ENCODE measurements at regions of chr7 and their contacts with region 1.

Region 1: DNA sequence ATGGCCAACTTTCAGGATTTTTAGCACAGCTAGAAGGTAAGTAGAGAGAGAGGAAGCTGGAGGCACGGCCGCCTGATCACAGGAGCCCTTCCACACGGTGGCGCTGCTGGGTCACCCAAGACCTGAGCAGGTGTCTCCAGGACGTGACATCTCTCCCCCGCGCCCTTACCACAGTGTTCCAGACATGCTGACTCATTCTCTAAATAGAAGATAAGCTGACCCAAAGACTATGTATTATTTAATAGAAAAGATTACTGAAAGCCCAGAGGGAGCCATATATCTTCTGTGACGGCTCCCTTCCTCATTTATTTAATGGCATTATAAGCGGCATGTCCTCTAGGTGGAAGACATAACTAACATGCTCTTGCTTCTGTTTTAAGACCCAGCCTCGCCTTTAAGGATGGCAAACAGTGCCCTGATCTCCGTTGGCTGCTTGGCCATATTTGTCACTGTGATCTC is 26.0 kb upstream of the MALSU1 start:
- DNase-seq: peak; percentile 64 to 90 (median 86)
- ATAC-seq: peak; percentile 59 to 92 (median 88)
- H3K4me3 ChIP-seq: no peak overlapping the region
- H3K27ac ChIP-seq: peak overlapping the region in 2 of 12 donors; percentile 19 to 22
- H3K4me1 ChIP-seq: peaks cover 0 to 9% (median 0%) of the 10 kb centered on the region in 12 donors
- H3K27me3 ChIP-seq: no peaks in the 10 kb centered on the region
- CTCF ChIP-seq: peak; percentile 55 to 76 (median 70)
- POLR2A ChIP-seq: no peak

Region 2: DNA sequence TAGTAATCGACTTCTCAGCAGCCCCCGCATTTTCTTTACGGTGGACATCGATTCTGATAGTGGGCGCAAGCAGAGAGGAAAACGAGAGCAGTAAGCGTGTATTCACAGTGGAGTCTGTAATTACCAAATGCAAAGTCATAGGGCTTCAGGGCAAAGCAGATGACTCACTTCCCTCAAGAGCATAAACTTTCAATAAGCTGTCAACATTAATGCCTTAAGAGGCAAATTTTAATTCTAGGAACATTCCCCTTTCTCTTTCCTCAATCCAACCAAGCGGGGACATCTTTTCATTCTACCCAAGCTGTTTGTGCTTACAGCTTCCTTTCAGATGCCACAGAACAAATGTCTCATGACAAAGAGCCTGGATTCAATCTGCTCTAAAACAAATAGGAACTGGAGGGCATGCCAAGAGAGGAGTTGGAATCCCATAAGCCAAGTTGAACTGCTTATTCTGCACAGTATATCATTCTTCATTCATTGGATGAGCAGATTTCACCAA is 74.6 kb after region 1 on chr7:
- intact Hi-C with region 1: loop called in 1 of 10 experiments (anchors 5 kb)
- DNase-seq: no peak
- ATAC-seq: no peak
- H3K4me3 ChIP-seq: peak overlapping the region in 1 of 12 donors; percentile 59
- H3K27ac ChIP-seq: peak overlapping the region in 1 of 12 donors; percentile 52
- H3K4me1 ChIP-seq: peaks cover 0 to 7% (median 0%) of the 10 kb centered on the region in 12 donors
- H3K27me3 ChIP-seq: peaks cover 0 to 4% (median 0%) of the 10 kb centered on the region in 9 donors
- CTCF ChIP-seq: no peak
- POLR2A ChIP-seq: no peak

Region 3: GRCh38 chr7:23462846-23463245 is 189.7 kb after region 1 on chr7:
- intact Hi-C with region 1: loop called (anchors 2 to 5 kb)
- DNase-seq: no peak
- ATAC-seq: peak in 3 of 4 donors; percentile 78 to 81 (median 80)
- H3K4me3 ChIP-seq: no peak overlapping the region
- H3K27ac ChIP-seq: no peak overlapping the region
- H3K4me1 ChIP-seq: peaks cover 0 to 10% (median 5%) of the 10 kb centered on the region in 12 donors
- H3K27me3 ChIP-seq: peaks cover 18 to 97% (median 56%) of the 10 kb centered on the region in 9 donors
- CTCF ChIP-seq: peak in 7 of 12 donors; percentile 24 to 49 (median 34)
- POLR2A ChIP-seq: no peak

Region 4: GRCh38 chr7:23546897-23547572 is 273.9 kb after region 1 on chr7:
- intact Hi-C with region 1: loop called in 3 of 10 experiments (anchors 10 kb)
- DNase-seq: peak in 4 of 5 donors; percentile 45 to 65 (median 60)
- ATAC-seq: peak in 3 of 4 donors; percentile 79 to 86 (median 83)
- H3K4me3 ChIP-seq: no peak overlapping the region
- H3K27ac ChIP-seq: no peak overlapping the region
- H3K4me1 ChIP-seq: no peaks in the 10 kb centered on the region
- H3K27me3 ChIP-seq: no peaks in the 10 kb centered on the region
- CTCF ChIP-seq: peak; percentile 89 to 97 (median 94)
- POLR2A ChIP-seq: no peak

Region 5: GRCh38 chr7:23712368-23713284 is 439.5 kb after region 1 on chr7:
- intact Hi-C with region 1: loop called in 2 of 10 experiments (anchors 10 kb)
- DNase-seq: no peak
- ATAC-seq: peak in 2 of 4 donors; percentile 55 to 68
- H3K4me3 ChIP-seq: no peak overlapping the region
- H3K27ac ChIP-seq: no peak overlapping the region
- H3K4me1 ChIP-seq: no peaks in the 10 kb centered on the region
- H3K27me3 ChIP-seq: no peaks in the 10 kb centered on the region
- CTCF ChIP-seq: peak; percentile 37 to 76 (median 61)
- POLR2A ChIP-seq: no peak

Measured in heart left ventricle (tissue), 16 donors.